ENCODE measurements at regions of chr3 and their contacts with region 1.

Region 1: DNA sequence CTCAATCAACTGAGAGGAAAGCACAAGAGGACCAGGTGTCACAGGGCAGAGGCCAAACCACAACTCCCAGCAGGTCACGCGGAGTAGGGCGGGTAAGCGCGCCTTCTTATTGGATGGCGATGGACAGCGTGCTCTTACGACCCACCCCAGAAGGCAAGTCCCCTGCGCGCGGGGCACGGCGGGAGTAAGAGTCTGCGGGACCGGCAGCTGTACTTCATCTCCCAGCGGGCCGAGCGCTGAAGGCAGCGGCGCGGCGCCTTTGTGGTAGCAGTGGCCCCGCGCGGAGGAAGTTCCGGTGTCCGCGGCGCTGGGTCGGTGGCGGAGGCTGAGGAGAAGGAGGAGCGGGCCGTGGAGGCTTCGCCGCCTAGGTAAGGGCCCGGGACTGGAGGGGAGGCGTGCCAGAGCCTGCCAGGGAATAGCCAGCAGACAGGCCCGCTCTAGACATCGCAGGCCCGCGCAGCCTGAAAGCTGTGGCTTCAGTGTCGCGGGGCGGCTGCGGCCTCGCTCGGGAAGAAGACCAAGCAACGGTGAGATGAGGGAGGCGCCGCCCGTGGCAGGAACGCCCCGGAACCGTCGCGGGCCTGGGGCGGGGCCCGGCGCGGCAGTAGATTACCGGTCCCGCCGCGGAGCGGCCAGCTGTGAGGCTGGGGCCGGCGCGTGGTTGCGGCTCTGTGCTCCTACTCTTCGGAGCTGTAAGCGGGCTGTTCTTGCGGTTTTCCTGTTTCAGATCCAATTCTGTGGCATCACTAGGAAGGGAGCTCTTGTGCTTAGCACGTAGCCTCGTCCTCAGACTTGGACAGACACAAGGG is at the start of gene RBM6:
- DNase-seq: peak; percentile 94 to 99
- H3K4me3 ChIP-seq: peak within 1 kb of the TSS; percentile 74 to 86
- H3K27ac ChIP-seq: peak within 1 kb of the TSS; percentile 90 to 97
- H3K4me1 ChIP-seq: peaks cover 3 to 6% of the 10 kb centered on the region in 2 donors
- H3K27me3 ChIP-seq: no peaks in the 10 kb centered on the region
- CTCF ChIP-seq: no peak
- total RNA-seq, gene RBM6: 84.7 TPM

Region 2: DNA sequence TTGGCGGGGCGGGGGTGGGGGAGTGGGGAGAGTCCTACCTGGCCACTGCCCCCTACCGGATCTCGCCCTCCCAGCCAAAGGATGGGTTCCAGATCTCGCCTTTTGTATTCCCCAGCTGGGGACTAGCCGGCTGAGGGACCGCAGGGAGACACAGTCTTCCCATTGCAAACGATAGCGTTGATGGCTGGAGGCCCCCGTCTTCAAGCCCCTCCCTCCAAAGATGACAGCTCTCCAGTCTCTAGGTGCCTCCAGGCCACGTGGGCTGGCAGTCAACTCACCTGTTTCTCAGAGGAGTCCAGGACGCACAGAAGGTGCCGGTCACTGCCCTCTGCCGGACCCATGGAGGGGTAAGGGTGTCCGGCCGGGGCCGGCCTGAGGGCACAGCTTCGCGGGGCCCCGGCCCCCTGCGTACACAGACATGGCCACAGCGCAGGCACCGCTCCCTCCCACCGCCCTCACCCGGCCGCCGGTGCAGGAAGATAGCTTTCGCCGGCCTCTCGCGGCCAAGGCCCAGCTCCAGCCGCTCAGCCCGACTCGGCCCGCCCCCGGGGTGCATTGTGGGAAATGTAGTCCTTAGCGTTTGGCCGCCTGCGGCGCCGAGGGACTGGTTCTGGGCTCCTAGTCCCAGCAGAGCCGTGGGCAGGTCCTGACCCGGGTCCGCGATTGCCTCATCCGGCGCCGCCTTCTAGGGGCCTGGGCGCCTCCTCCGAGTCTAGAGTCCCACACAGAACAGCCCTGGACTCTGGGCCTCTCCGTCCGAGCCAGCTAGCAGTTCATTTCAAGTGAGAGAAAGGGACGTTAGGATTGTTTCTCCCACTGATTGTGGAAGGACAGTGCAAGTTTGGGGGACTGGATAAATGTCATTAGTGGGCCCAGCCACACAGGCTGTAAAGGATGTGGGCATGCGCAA is 10.5 kb before region 1 on chr3 and contains the start of gene MON1A:
- intact Hi-C with region 1: loop called (anchors 1 kb)
- DNase-seq: peak; percentile 75 to 97
- H3K4me3 ChIP-seq: peak within 1 kb of the TSS; percentile 72 to 77
- H3K27ac ChIP-seq: peak within 1 kb of the TSS; percentile 83 to 90
- H3K4me1 ChIP-seq: peaks cover 8 to 10% of the 10 kb centered on the region in 2 donors
- H3K27me3 ChIP-seq: no peaks in the 10 kb centered on the region
- CTCF ChIP-seq: peak; percentile 21 to 45 (median 24)
- total RNA-seq, gene MON1A: 13.0 TPM

Measured in ascending aorta (tissue), 2 donors.